A549 (cell line): ENCODE measurements at regions of chr17 and their contacts with region 1.

Region 1: DNA sequence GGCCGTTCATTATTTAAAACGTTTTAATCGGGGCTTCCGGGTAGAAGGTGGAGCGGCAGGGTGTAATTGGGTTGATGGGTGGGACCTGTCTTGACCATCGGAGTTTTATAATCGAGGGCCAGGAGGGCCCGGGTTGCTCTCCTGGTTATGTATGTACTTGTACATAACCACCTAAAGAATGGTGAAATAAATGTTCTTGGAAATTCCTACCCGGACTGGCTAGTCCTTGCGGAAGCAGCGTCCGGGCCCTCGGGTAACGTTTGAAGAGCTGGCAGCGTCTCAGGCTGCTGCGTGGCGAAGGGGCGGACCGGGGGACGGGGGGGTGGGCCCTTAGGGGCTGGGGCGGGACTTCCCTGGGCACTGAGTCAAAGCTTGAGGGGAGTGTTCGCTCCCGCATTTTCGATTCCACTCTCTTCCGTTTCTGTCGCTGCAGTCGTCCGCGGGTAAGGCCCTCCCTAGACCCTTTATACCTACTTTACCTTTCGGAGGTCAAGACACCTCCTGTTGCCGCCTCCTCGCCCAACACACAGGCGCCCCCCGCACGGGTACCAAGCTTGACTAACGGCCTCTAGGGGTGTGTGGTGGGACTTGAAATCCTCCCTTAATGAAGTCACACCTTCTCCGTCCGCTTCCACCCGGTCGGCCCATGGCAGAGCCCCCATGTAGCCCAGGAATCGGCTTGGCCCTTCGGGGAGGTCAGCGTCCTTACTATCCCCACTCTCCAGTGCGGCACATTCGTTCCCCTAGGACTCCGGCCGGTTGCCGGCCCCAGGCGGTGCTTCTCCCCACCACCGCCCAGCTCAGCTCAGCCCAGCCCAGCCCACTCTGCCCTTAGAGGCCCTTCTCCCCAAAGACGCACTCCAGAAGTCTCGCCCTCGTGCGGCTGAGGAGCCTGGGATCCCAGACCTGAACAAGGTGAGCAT is at the start of gene TMEM106A:
- DNase-seq: peak; percentile 84 to 97
- ATAC-seq: peak; percentile 90 to 92
- H3K4me3 ChIP-seq: peak within 1 kb of the TSS; percentile 51
- H3K27ac ChIP-seq: peak within 1 kb of the TSS; percentile 75 to 84
- H3K4me1 ChIP-seq: peaks cover 14% of the 10 kb centered on the region
- CTCF ChIP-seq: no peak
- EP300 ChIP-seq: no peak
- POLR2A ChIP-seq: peak; percentile 47
- RAD21 ChIP-seq: 0 out of 5 replicates have a peak, but pooled peaks of 1 of the 2 experiments have one; percentile 16
- polyA plus RNA-seq, gene TMEM106A: 2.6 and 3.5 TPM in 2 replicates

Region 2: GRCh38 chr17:43129671-43130010 is 82.1 kb before region 1 on chr17:
- CTCF ChIA-PET with region 1: no interaction called
- POLR2A ChIA-PET with region 1: no interaction called
- DNase-seq: no peak
- ATAC-seq: no peak
- H3K4me3 ChIP-seq: no peak overlapping the region
- H3K27ac ChIP-seq: no peak overlapping the region
- H3K4me1 ChIP-seq: peaks cover 8% of the 10 kb centered on the region; the same call in 2 of the 3 replicates
- CTCF ChIP-seq: no peak
- EP300 ChIP-seq: no peak
- POLR2A ChIP-seq: no peak
- RAD21 ChIP-seq: no peak

Region 3: DNA sequence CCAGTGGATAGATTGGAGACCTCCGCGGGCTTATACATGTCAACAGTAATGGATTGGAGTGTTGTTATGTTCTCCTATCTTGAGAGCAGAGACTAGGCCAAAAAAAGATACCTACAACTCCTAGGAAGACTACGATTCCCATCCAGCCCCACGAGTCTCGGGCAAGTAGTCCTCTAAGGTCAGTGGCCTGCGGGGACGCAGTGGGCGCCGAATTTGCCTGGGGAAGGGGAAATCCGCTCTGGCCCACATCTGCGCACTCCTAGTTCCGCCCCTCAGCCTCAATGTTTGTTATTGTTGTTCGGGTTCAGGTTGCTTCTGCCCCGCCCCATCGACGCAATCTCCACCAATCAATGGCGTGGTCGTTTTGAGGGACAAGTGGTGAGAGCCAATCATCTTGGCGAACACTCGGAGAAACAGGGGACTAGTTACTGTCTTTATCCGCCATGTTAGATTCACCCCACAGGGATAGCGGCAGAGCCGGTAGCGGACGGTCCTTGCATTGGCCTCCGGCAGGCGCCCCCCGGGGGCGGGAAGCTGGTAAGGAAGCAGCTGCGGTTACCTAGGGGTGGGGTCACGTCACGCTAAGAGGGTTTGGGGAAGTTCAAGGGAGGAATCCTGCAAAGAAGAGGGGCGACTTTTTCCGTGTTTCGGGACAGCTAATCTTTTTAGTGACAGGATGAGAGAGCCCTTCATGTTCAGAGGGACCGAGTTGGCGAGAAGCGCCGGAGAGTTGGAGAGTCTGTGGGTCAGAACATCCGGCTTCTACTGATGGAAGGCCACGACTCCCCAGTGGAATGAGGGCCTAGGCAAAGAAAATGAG is 40.8 kb before region 1 on chr17 and contains the start of gene NBR1:
- CTCF ChIA-PET with region 1: interaction called, 4 read pairs
- POLR2A ChIA-PET with region 1: interaction called, 13 read pairs
- DNase-seq: peak; percentile 99 to 100
- ATAC-seq: peak; percentile 86 to 90
- H3K4me3 ChIP-seq: peak within 1 kb of the TSS; percentile 74
- H3K27ac ChIP-seq: peak within 1 kb of the TSS; percentile 86 to 90
- H3K4me1 ChIP-seq: peaks cover 43% of the 10 kb centered on the region
- CTCF ChIP-seq: no peak; the same call in 2 of the 3 replicates
- EP300 ChIP-seq: no peak
- POLR2A ChIP-seq: peak; percentile 2; the same call in 1 of the 2 replicates
- RAD21 ChIP-seq: no peak
- polyA plus RNA-seq, gene NBR1: 86.8 and 103 TPM in 2 replicates

Region 4: GRCh38 chr17:43200127-43200526 is 11.6 kb before region 1 on chr17:
- CTCF ChIA-PET with region 1: interaction called, 12 read pairs
- POLR2A ChIA-PET with region 1: interaction called, 11 read pairs
- DNase-seq: no peak
- ATAC-seq: peak in 1 of 2 experiments; percentile 59; a peak in 3 of 6 replicates
- H3K4me3 ChIP-seq: no peak overlapping the region
- H3K27ac ChIP-seq: no peak overlapping the region
- H3K4me1 ChIP-seq: no peaks in the 10 kb centered on the region
- CTCF ChIP-seq: no peak
- EP300 ChIP-seq: no peak
- POLR2A ChIP-seq: no peak
- RAD21 ChIP-seq: no peak

Region 5: GRCh38 chr17:43341715-43342588 is 130.2 kb after region 1 on chr17:
- CTCF ChIA-PET with region 1: no interaction called
- POLR2A ChIA-PET with region 1: no interaction called
- DNase-seq: no peak
- ATAC-seq: 0 out of 6 replicates have a peak, but pooled peaks of 1 of the 2 experiments have one; percentile 29
- H3K4me3 ChIP-seq: no peak overlapping the region
- H3K27ac ChIP-seq: no peak overlapping the region
- H3K4me1 ChIP-seq: peaks cover 10% of the 10 kb centered on the region
- CTCF ChIP-seq: no peak
- EP300 ChIP-seq: no peak
- POLR2A ChIP-seq: no peak
- RAD21 ChIP-seq: no peak